Prostate gland (tissue), 2 donors: ENCODE measurements at regions of chr20 and their contacts with region 1.

Region 1: DNA sequence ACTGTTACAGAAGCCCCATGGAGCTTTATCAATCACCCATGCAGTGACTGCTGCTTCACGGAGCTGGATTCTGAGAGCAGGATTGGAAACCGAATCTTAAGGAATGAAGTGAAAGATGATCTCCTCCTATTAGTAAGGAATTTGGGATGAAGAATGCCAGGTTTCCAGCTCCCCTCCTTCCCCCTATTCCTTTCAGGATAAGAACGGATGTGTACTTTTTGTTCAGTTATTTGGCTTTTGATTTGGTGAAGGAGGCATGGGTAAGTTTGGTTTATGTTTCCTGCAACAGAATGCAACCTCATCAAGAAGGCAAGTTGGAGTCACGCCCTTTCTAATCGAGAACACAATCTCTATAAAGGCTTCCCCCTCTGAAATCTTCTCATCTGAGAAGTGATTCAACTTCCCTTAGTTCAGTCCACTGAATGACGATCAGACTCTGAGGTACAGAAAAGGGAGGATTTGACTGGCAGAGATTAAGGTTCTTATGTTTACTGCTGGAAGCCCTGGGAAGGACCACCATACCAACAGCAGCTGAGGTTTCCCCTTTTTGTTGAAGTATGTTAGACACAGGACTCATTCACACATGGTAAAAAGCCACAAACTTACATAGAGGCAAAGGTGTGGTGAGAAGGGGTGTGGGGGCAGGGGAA is 5.5 kb downstream of the ELMO2 start:
- DNase-seq: no peak
- H3K4me3 ChIP-seq: peak overlapping the region in 1 of 2 donors; percentile 2
- H3K27ac ChIP-seq: peak overlapping the region; percentile 98
- H3K4me1 ChIP-seq: peaks cover 48% of the 10 kb centered on the region
- H3K27me3 ChIP-seq: no peaks in the 10 kb centered on the region
- CTCF ChIP-seq: no peak
- POLR2A ChIP-seq: no peak

Region 2: GRCh38 chr20:46363800-46364634 is 36.9 kb before region 1 on chr20:
- intact Hi-C with region 1: loop called (anchors 5 kb)
- DNase-seq: peak; percentile 83
- H3K4me3 ChIP-seq: peak overlapping the region; percentile 98 to 99
- H3K27ac ChIP-seq: peak overlapping the region; percentile 99
- H3K4me1 ChIP-seq: peaks cover 6% of the 10 kb centered on the region
- H3K27me3 ChIP-seq: no peaks in the 10 kb centered on the region
- CTCF ChIP-seq: peak in 1 of 4 experiments; percentile 11
- POLR2A ChIP-seq: peak; percentile 81